ENCODE measurements at regions of chr16 and their contacts with region 1.

Region 1: DNA sequence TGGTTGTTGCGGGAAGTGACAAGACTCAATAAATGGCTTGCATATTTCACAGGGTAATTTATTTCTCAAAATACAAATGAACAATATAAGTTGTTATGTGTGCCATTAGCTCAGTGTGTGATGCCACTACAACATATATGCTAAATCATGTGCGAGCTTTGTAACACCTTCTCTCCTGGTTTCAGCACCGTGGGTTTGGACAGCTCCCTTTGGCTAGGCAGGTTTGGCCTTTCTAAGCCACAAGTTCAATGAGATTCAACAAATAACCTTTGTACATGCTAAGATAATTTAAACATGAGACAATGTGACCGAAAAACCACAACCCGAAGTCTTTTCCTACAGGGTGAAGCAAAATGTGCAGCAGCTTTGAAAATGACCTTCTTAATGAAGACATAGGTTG is 563.9 kb downstream of the TMEM114 start:
- DNase-seq: peak; percentile 21 to 52 (median 24)
- ATAC-seq: no peak
- H3K4me3 ChIP-seq: no peak overlapping the region
- H3K27ac ChIP-seq: no peak overlapping the region
- H3K4me1 ChIP-seq: no peaks in the 10 kb centered on the region
- H3K27me3 ChIP-seq: no peaks in the 10 kb centered on the region
- CTCF ChIP-seq: no peak
- EP300 ChIP-seq: no peak
- POLR2A ChIP-seq: no peak
- RAD21 ChIP-seq: no peak

Region 2: DNA sequence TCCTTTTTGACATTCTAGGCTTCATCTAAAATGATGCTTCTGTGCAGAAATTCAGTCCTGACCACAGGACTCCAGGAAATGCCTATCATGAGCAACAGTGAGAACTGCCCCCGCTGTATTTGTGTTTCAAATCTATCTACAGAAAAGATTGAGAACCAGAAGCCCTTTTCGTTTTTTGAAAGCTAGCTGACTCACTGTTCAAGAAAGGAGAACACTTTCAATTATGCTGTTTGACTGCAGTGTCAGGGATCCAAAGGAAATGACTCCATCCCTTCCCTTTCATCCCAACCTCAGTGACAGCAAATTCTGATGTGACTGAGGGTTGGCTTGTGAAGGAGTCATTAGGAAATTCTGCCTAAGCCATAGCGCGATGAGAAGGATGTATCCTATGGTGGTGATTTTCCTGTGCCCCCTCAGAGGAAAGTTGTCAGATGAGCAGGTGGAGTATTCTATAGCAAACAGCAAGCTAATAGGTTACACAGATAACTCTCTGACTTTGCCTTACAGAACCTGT is 58.4 kb before region 1 on chr16:
- CTCF ChIA-PET with region 1: no interaction called
- POLR2A ChIA-PET with region 1: no interaction called
- in situ Hi-C with region 1: no loop called
- intact Hi-C with region 1: no loop called
- DNase-seq: no peak
- ATAC-seq: no peak
- H3K4me3 ChIP-seq: no peak overlapping the region
- H3K27ac ChIP-seq: no peak overlapping the region
- H3K4me1 ChIP-seq: no peaks in the 10 kb centered on the region
- H3K27me3 ChIP-seq: no peaks in the 10 kb centered on the region
- CTCF ChIP-seq: no peak
- EP300 ChIP-seq: no peak
- POLR2A ChIP-seq: no peak
- RAD21 ChIP-seq: no peak

Region 3: GRCh38 chr16:7983676-7984075 is 42.8 kb before region 1 on chr16:
- CTCF ChIA-PET with region 1: no interaction called
- POLR2A ChIA-PET with region 1: no interaction called
- in situ Hi-C with region 1: no loop called
- intact Hi-C with region 1: no loop called
- DNase-seq: no peak
- ATAC-seq: no peak
- H3K4me3 ChIP-seq: no peak overlapping the region
- H3K27ac ChIP-seq: no peak overlapping the region
- H3K4me1 ChIP-seq: no peaks in the 10 kb centered on the region
- H3K27me3 ChIP-seq: no peaks in the 10 kb centered on the region
- CTCF ChIP-seq: no peak
- EP300 ChIP-seq: no peak
- POLR2A ChIP-seq: no peak
- RAD21 ChIP-seq: no peak

Region 4: DNA sequence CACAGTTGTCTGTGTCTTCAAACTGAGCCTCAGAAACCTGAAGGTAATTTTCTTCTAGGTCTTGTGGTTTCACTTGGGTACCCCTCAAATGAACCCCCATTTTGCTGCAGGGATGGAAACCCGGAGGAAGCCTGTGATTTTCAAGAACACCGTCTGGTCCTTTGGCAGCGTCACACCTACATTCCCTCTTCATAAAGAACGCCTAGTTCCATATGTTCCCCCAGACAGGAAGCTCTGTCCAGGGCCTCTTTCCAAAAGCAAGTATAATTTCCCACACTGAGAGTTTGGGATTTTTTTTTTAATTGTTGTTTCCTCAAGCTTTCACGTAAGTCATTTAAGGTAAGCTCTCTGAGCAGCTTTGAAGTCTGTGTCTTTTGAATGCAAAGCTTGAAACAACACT is 48.8 kb after region 1 on chr16:
- CTCF ChIA-PET with region 1: no interaction called
- POLR2A ChIA-PET with region 1: no interaction called
- in situ Hi-C with region 1: no loop called
- intact Hi-C with region 1: no loop called
- DNase-seq: no peak
- ATAC-seq: no peak
- H3K4me3 ChIP-seq: no peak overlapping the region
- H3K27ac ChIP-seq: no peak overlapping the region
- H3K4me1 ChIP-seq: no peaks in the 10 kb centered on the region
- H3K27me3 ChIP-seq: no peaks in the 10 kb centered on the region
- CTCF ChIP-seq: no peak
- EP300 ChIP-seq: no peak
- POLR2A ChIP-seq: no peak
- RAD21 ChIP-seq: no peak

Region 5: DNA sequence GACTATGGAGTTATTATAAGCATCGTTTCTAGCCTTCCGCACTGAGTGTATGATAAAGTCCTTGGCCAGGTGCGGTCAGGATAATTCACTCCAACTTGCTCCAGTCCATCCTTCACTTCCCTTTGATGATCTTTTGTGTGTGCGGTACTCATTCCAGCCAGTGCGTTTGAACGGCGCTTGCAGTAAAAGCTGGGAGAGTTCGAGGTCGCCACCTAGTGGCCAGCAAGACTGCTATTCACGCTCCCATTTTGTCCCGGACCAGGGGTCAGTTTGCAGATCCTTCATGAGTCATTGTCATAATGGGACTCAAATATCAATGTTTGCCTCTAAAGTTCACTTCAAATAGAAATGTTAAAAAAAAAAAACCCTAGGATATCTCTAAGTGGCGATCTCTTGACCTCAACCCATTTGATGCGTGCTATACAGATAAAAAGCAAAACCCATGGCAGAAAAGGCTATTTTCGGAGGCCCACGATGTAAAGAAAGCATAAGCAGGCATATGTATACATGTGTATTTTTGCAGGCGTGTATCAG is 146.7 kb after region 1 on chr16:
- CTCF ChIA-PET with region 1: no interaction called
- POLR2A ChIA-PET with region 1: no interaction called
- in situ Hi-C with region 1: no loop called
- intact Hi-C with region 1: loop called (anchors 10 kb)
- DNase-seq: peak; percentile 85 to 94 (median 87)
- ATAC-seq: peak; percentile 100
- H3K4me3 ChIP-seq: no peak overlapping the region
- H3K27ac ChIP-seq: no peak overlapping the region
- H3K4me1 ChIP-seq: peaks cover 0 to 1% of the 10 kb centered on the region in 2 experiments; a peak in 2 of 5 replicates
- H3K27me3 ChIP-seq: peaks cover 19% of the 10 kb centered on the region in 2 experiments
- CTCF ChIP-seq: peak; percentile 99 to 100 (median 100)
- EP300 ChIP-seq: no peak
- POLR2A ChIP-seq: no peak
- RAD21 ChIP-seq: peak; percentile 84 to 93